PC-3 (cell line): ENCODE measurements at regions of chr10 and their contacts with region 1.

Region 1: DNA sequence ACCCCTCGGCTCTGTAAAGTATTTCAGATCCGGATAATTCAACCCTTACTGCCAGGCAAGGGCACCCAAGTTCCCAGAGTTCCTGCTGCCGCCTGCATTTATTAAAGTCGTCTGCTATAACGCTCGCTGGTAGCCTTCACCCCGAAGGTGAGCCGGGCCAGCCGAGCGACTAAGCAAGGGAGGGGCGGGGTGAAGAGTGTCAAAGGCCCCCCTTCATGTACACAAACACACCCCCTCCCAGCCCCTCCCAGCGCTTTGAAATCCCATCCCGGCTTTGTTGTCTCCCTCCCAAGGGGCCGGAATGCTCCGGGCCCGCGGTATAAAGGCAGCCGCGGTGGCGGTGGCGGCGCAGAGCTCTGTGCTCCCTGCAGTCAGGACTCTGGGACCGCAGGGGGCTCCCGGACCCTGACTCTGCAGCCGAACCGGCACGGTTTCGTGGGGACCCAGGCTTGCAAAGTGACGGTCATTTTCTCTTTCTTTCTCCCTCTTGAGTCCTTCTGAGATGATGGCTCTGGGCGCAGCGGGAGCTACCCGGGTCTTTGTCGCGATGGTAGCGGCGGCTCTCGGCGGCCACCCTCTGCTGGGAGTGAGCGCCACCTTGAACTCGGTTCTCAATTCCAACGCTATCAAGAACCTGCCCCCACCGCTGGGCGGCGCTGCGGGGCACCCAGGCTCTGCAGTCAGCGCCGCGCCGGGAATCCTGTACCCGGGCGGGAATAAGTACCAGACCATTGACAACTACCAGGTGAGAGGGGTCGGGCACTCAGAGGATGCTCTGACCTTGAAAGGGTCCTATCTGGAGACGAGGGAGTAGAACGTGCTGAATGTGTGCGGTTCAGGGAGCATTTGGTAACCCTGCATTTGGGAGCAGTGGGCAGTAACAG is at the start of gene DKK1:
- DNase-seq: peak; percentile 100
- ATAC-seq: peak; percentile 55
- H3K4me3 ChIP-seq: peak within 1 kb of the TSS; percentile 76
- H3K27ac ChIP-seq: peak within 1 kb of the TSS; percentile 82
- H3K4me1 ChIP-seq: peaks cover 49% of the 10 kb centered on the region
- H3K27me3 ChIP-seq: no peaks in the 10 kb centered on the region
- CTCF ChIP-seq: peak; percentile 100
- total RNA-seq, gene DKK1: 1,187 and 1,592 TPM in 2 replicates

Region 2: DNA sequence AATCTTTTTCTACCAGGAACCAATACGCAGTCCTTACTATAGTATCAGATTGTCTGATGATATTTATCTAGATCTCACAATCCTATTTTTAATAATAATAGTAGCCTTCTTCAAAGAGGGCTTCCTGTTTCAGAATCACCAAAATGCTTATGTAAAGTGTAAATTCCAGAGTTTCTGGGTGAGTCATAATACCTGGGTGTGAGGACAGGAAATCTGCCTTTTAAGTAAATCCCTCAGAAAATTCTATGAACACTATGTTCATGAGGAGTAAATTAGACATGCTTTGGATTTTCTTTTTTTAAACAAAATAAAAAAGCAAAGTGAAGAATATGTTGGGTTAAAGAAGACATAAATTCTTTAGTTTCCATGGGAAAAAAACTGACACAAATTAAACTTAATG is 20.4 kb after region 1 on chr10:
- CTCF ChIA-PET with region 1: interaction called, 4 read pairs
- POLR2A ChIA-PET with region 1: interaction called, 7 read pairs
- intact Hi-C with region 1: loop called (anchors 1 kb)
- DNase-seq: peak; percentile 93
- ATAC-seq: peak; percentile 53
- H3K4me3 ChIP-seq: 0 out of 2 replicates have a peak overlapping the region, but pooled peaks have one; percentile 0
- H3K27ac ChIP-seq: peak overlapping the region; percentile 74
- H3K4me1 ChIP-seq: peaks cover 52% of the 10 kb centered on the region
- H3K27me3 ChIP-seq: no peaks in the 10 kb centered on the region
- CTCF ChIP-seq: no peak

Region 3: DNA sequence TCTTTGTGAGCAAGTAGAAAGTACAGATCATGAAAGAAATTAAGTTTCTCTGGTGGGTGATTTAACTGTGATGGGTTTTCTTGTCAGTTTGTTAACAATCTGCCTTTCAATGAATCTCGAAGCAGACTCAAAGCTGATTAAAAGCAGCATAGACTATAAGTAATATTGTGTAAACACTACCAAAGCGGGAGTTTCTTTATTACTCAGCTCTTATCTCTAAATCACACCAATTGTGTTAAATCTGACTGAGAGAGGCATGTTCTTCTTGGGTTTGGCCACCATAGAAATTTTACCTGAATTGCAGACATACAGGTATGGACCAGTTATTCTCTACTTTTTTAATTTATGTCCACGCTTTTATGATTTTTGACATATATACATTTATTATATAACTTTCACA is 65.1 kb after region 1 on chr10:
- CTCF ChIA-PET with region 1: no interaction called
- POLR2A ChIA-PET with region 1: interaction called, 3 read pairs
- intact Hi-C with region 1: loop called (anchors 1 kb)
- DNase-seq: peak; percentile 62
- ATAC-seq: peak; percentile 67
- H3K4me3 ChIP-seq: no peak overlapping the region
- H3K27ac ChIP-seq: no peak overlapping the region
- H3K4me1 ChIP-seq: peaks cover 6% of the 10 kb centered on the region
- H3K27me3 ChIP-seq: no peaks in the 10 kb centered on the region
- CTCF ChIP-seq: no peak

Region 4: DNA sequence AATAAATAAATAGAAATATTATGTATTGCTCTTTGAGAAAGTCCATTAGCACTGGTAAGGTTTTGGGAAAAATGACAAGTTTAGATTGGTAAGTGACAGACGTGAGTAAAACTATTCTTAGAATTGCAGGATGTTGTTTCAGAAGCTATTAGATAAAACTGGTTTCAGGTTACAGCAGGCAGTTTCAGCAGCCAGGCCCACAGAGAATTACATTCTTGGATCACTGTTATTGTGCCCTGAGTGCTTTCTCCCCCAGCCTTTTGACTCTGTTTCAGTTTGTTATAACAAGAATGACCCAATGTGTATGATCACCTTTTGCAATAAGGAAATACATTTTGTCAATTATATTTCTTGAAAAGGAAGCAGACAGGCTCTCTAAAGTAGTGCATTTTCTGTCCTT is 86.4 kb after region 1 on chr10:
- CTCF ChIA-PET with region 1: no interaction called
- POLR2A ChIA-PET with region 1: no interaction called
- intact Hi-C with region 1: no loop called
- DNase-seq: peak; percentile 42
- ATAC-seq: peak; percentile 69
- H3K4me3 ChIP-seq: no peak overlapping the region
- H3K27ac ChIP-seq: no peak overlapping the region
- H3K4me1 ChIP-seq: no peaks in the 10 kb centered on the region
- H3K27me3 ChIP-seq: no peaks in the 10 kb centered on the region
- CTCF ChIP-seq: no peak

Region 5: DNA sequence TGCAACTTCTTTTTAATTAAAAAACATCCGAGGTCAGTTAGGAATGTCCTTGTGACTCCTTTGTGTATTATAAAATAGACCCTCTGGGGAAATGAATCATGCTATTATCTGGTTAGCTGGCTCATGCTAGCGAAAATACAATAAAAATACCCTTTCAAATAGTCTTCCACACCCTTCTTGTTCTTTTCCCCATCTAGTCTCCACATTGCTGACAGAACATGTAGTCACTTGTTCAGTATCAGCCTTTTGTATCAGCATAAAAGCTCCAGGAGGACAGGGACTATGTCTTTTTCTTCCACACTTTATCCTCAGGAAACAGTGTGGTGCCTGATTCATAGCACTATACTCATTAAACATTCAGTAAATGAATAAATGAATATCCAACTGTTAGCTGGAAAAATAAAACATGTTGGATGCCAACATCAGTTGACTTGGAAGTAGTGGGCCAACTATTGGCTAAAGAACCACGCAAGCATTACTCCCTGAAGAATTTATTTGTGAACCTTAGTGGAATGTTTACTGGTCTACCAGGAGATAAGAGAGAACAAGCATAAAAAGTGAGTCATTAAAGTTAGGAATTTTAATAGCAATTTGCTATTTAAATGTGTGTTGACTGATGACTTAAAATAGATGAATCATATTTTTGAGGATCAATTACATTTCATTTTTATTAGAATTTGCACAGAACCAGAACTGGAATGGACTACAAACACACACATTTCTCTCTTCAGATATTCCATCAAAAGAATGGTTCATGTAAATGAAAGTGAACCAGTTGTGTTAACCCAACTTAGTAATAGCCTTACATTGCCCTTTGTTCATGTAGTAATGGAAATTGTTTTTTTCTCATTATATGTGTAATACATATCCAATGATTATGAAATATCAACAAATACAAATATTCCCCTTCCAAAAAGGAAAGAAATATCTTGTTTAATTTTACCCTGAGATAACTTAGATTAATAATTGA is 129.5 kb after region 1 on chr10:
- CTCF ChIA-PET with region 1: interaction called, 8 read pairs
- POLR2A ChIA-PET with region 1: interaction called, 12 read pairs
- intact Hi-C with region 1: loop called (anchors 1 kb)
- DNase-seq: peak; percentile 100
- ATAC-seq: peak; percentile 80
- H3K4me3 ChIP-seq: peak overlapping the region; percentile 36
- H3K27ac ChIP-seq: peak overlapping the region; percentile 82
- H3K4me1 ChIP-seq: peaks cover 62% of the 10 kb centered on the region
- H3K27me3 ChIP-seq: no peaks in the 10 kb centered on the region
- CTCF ChIP-seq: no peak

Region 6: DNA sequence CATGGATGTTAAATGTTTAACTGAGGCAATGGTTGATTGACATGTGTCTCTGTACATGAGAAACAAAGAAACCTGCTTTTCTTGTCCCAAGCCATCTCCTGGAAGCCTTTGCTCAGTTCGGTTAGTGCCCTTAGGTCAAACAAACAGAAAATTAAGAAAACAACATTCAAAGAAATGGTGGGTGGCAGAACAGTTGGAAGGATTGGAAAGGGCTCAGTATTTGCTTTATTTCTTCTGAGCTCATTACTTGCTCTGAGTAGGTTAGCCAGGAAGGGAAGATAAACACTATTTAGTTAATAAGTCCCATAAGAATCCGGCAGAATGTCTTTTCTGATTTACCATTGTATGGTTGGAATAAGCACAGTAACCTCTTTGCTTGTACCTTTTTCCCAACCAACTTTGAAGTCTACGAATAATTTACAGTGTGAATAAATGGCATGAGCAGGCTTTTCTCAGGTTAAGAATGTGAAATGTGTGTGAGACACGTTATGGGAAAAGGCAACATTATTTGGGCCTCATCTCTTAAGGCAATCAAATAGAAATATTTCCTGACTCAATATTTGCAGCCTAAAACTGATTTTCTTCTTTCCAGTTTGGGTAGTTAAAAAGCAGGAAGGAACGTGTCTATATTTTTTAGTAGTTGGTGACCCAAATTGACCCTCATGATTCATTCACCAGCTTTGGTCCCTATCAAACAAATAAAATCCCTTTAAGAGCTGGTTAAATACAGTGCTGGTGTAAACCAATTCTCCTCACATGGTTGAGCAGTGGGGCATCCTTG is 158.4 kb after region 1 on chr10:
- CTCF ChIA-PET with region 1: interaction called, 11 read pairs
- POLR2A ChIA-PET with region 1: interaction called, 9 read pairs
- intact Hi-C with region 1: loop called (anchors 1 kb)
- DNase-seq: peak; percentile 100
- ATAC-seq: peak; percentile 83
- H3K4me3 ChIP-seq: peak overlapping the region; percentile 38
- H3K27ac ChIP-seq: peak overlapping the region; percentile 85
- H3K4me1 ChIP-seq: peaks cover 63% of the 10 kb centered on the region
- H3K27me3 ChIP-seq: no peaks in the 10 kb centered on the region
- CTCF ChIP-seq: no peak

Region 7: GRCh38 chr10:52586710-52587109 is 272.5 kb after region 1 on chr10:
- CTCF ChIA-PET with region 1: no interaction called
- POLR2A ChIA-PET with region 1: interaction called, 13 read pairs
- intact Hi-C with region 1: no loop called
- DNase-seq: no peak
- ATAC-seq: no peak
- H3K4me3 ChIP-seq: no peak overlapping the region
- H3K27ac ChIP-seq: no peak overlapping the region
- H3K4me1 ChIP-seq: no peaks in the 10 kb centered on the region
- H3K27me3 ChIP-seq: no peaks in the 10 kb centered on the region
- CTCF ChIP-seq: 0 out of 2 replicates have a peak, but pooled peaks have one; percentile 7